Natural killer cell (primary cell): ENCODE measurements at regions of chr19 and their contacts with region 1.

Region 1: GRCh38 chr19:38899447-38900219 is at the starts of genes NFKBIB and SIRT2:
- DNase-seq: peak; percentile 97 to 100
- ATAC-seq: peak; percentile 82 to 95 (median 82)
- H3K4me3 ChIP-seq: peak within 1 kb of the TSS; percentile 82
- H3K4me3 Mint-ChIP-seq: peak within 1 kb of the TSS; percentile 97
- H3K27ac ChIP-seq: peak within 1 kb of the TSS; percentile 95
- H3K27ac Mint-ChIP-seq: peak within 1 kb of the TSS; percentile 96 to 98
- H3K4me1 ChIP-seq: peaks cover 35% of the 10 kb centered on the region
- H3K4me1 Mint-ChIP-seq: peaks cover 64 to 65% of the 10 kb centered on the region in 2 donors
- H3K27me3 ChIP-seq: no peaks in the 10 kb centered on the region
- H3K27me3 Mint-ChIP-seq: no peaks in the 10 kb centered on the region
- CTCF ChIP-seq: no peak
- total RNA-seq, gene NFKBIB: 78.0 to 125 (median 118) TPM
- total RNA-seq, gene SIRT2: 171 to 283 (median 208) TPM

Region 2: DNA sequence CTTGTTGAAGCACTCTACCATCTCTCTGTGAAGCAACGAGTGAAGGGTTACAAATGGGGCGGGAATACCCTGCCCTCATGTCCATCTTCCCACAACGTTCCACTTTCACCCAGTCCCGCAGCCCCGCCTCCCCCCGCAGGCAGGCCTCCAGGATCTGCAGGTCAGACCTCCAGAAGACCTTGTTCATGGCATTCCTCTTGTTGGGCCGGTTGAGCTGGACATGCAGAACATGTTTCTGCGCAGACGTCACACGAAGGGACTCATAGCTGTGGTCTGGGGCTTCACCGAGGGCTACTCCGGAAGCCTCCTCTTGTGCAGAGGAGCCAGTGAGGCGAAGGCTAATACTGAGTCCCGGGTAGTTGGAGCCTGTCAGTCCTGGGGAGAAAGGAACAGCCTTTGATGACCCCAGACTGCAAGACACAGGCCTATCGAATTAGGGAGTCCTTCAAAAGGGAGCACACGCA is 68.5 kb before region 1 on chr19:
- intact Hi-C with region 1: loop called (anchors 5 kb)
- DNase-seq: no peak
- ATAC-seq: peak; percentile 39 to 52 (median 43)
- H3K4me3 ChIP-seq: peak overlapping the region; percentile 64
- H3K4me3 Mint-ChIP-seq: peak overlapping the region; percentile 97
- H3K27ac ChIP-seq: peak overlapping the region; percentile 69
- H3K27ac Mint-ChIP-seq: peak overlapping the region; percentile 93 to 95
- H3K4me1 ChIP-seq: peaks cover 16% of the 10 kb centered on the region
- H3K4me1 Mint-ChIP-seq: peaks cover 14 to 22% of the 10 kb centered on the region in 2 donors
- H3K27me3 ChIP-seq: no peaks in the 10 kb centered on the region
- H3K27me3 Mint-ChIP-seq: no peaks in the 10 kb centered on the region
- CTCF ChIP-seq: no peak

Region 3: GRCh38 chr19:38849860-38850435 is 49.7 kb before region 1 on chr19 and contains the start of gene HNRNPL:
- intact Hi-C with region 1: loop called (anchors 1 kb)
- DNase-seq: peak in 1 of 2 donors; percentile 98
- ATAC-seq: peak; percentile 58 to 85 (median 69)
- H3K4me3 ChIP-seq: peak within 1 kb of the TSS; percentile 84
- H3K4me3 Mint-ChIP-seq: peak within 1 kb of the TSS; percentile 96
- H3K27ac ChIP-seq: peak within 1 kb of the TSS; percentile 97
- H3K27ac Mint-ChIP-seq: peak within 1 kb of the TSS; percentile 99 to 100
- H3K4me1 ChIP-seq: peaks cover 61% of the 10 kb centered on the region
- H3K4me1 Mint-ChIP-seq: peaks cover 59 to 69% of the 10 kb centered on the region in 2 donors
- H3K27me3 ChIP-seq: no peaks in the 10 kb centered on the region
- H3K27me3 Mint-ChIP-seq: no peaks in the 10 kb centered on the region
- CTCF ChIP-seq: peak; percentile 26
- total RNA-seq, gene HNRNPL: 636 to 800 (median 702) TPM

Region 4: DNA sequence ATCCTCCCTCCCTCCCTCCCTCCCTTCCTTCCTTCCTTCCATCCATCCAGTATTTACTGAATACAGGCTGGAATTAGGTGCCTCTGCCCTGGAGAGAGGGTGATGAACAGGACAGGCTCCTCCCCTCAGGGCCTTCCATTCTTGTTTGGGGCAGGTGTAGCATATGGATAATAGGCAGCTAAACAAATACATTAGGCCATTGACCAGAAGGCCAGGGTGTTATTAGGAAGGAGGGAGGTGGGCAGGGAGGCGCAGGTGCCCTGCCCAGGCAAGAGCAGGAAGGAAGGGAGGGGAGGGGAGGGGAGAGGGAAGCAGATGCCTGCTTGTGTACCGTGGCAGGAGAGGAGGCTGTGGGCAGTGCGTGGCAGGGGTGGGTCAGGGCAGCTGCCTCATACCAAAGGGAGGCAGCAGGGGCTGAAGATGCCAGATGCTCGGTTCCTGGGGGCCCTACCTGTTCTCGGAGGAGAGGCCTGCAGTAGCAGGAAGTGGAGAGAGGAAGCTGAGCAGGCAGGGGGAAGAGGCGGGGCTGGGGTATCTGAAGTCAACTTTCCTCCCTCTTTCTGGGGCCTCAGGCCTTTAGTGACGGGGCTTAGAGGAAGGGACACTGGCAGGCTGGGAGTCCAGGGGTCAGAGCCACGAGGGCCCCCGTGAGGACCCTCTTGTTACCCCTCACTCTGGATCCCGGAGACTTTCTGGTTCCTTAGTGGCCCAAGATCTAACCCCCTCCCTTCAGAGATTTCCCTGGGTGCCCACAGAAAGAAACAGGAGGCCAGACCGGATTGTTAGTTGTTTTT is 21.7 kb before region 1 on chr19 and contains the start of gene RINL:
- intact Hi-C with region 1: loop called (anchors 1 kb)
- DNase-seq: peak; percentile 56 to 83
- ATAC-seq: peak; percentile 74 to 87 (median 82)
- H3K4me3 ChIP-seq: peak within 1 kb of the TSS; percentile 38
- H3K4me3 Mint-ChIP-seq: peak within 1 kb of the TSS; percentile 82
- H3K27ac ChIP-seq: peak within 1 kb of the TSS; percentile 94
- H3K27ac Mint-ChIP-seq: peak within 1 kb of the TSS; percentile 94 to 97
- H3K4me1 ChIP-seq: peaks cover 28% of the 10 kb centered on the region
- H3K4me1 Mint-ChIP-seq: peaks cover 21 to 30% of the 10 kb centered on the region in 2 donors
- H3K27me3 ChIP-seq: no peaks in the 10 kb centered on the region
- H3K27me3 Mint-ChIP-seq: no peaks in the 10 kb centered on the region
- CTCF ChIP-seq: no peak
- total RNA-seq, gene RINL: 59.7 to 65.6 (median 59.7) TPM

Region 5: GRCh38 chr19:38924388-38924787 is 24.8 kb after region 1 on chr19:
- intact Hi-C with region 1: loop called (anchors 1 kb)
- DNase-seq: peak; percentile 65 to 74
- ATAC-seq: peak; percentile 78 to 89 (median 84)
- H3K4me3 ChIP-seq: no peak overlapping the region
- H3K4me3 Mint-ChIP-seq: peak overlapping the region; percentile 33
- H3K27ac ChIP-seq: peak overlapping the region; percentile 90
- H3K27ac Mint-ChIP-seq: peak overlapping the region; percentile 91 to 99
- H3K4me1 ChIP-seq: peaks cover 60% of the 10 kb centered on the region
- H3K4me1 Mint-ChIP-seq: peaks cover 25 to 48% of the 10 kb centered on the region in 2 donors
- H3K27me3 ChIP-seq: no peaks in the 10 kb centered on the region
- H3K27me3 Mint-ChIP-seq: no peaks in the 10 kb centered on the region
- CTCF ChIP-seq: no peak